ENCODE measurements at regions of chr3 and their contacts with region 1.

Region 1: GRCh38 chr3:125374501-125374995 is 577 bp downstream of the ZNF148 start:
- DNase-seq: no peak
- ATAC-seq: peak; percentile 57
- H3K4me3 ChIP-seq: peak overlapping the region; percentile 95 to 96
- H3K27ac ChIP-seq: peak overlapping the region; percentile 65
- H3K4me1 ChIP-seq: peaks cover 9 to 18% of the 10 kb centered on the region in 2 experiments; a peak in 3 of 4 replicates
- H3K27me3 ChIP-seq: no peaks in the 10 kb centered on the region
- CTCF ChIP-seq: no peak
- POLR2A ChIP-seq: no peak
- RAD21 ChIP-seq: no peak

Region 2: GRCh38 chr3:125334675-125335560 is 39.6 kb before region 1 on chr3:
- CTCF ChIA-PET with region 1: no interaction called
- POLR2A ChIA-PET with region 1: no interaction called
- RAD21 ChIA-PET with region 1: no interaction called
- intact Hi-C with region 1: loop called (anchors 1 kb)
- DNase-seq: no peak
- ATAC-seq: no peak
- H3K4me3 ChIP-seq: no peak overlapping the region
- H3K27ac ChIP-seq: no peak overlapping the region
- H3K4me1 ChIP-seq: peaks cover 8 to 12% of the 10 kb centered on the region in 2 experiments; a peak in 2 of 4 replicates
- H3K27me3 ChIP-seq: no peaks in the 10 kb centered on the region
- CTCF ChIP-seq: no peak
- POLR2A ChIP-seq: no peak
- RAD21 ChIP-seq: no peak